GM10248 (cell line): ENCODE measurements at regions of chr2 and their contacts with region 1.

Region 1: GRCh38 chr2:45585267-45585861 is 25.7 kb downstream of the SRBD1 start:
- DNase-seq: peak; percentile 27
- CTCF ChIP-seq: peak; percentile 56

Region 2: DNA sequence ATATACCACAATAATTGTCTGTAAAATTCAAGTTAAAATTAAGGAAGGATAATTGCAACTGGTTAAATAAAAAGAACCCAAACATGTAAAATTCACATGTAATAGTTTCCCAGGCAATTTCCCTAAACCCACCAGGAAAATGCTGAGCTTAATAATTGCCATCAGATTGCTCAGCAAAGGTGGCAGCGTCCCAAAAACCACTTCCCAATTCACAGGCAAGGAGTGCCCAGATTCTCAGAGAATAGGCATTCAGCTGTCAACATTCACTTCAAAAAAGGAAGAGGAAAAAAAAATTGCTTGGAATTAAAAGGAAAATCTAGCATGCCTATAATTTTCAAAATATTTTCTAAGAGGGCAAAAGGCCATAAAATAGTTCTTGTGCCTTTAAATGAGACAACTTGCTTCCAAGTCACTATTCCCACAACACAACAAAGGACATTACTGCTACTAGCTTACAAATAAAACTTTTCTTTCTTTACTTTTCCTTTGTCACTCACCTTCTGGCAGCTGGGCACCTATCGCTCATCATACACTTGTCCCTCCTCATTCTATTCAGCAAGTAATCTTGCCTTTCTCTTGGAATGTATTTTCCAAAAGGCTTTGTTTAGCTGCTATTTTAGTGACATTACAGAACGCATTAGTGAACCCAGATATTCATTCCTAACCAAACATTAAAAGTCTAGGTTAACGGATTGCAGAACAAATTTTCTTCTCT is 10.5 kb after region 1 on chr2:
- CTCF ChIA-PET with region 1: interaction called, 12 read pairs
- POLR2A ChIA-PET with region 1: no interaction called
- DNase-seq: no peak
- CTCF ChIP-seq: no peak

Region 3: DNA sequence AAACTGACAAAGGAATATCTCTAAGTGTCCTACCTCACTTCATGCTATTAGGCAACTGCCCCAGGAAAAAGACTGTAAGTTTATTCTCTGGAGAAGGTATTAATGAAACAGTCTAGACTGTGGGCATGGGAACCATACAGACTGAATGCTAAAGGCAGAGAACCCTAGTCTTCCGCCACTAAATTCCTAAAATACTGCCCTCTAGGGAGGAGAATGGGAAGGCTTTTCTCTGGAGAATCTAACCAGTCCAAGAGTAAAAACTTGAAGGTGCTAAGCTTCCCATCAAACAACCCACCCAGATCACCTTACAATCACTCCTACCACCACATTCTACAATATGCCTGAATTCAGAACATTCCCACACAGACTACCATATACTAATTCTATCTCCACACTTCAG is 22.3 kb after region 1 on chr2:
- CTCF ChIA-PET with region 1: interaction called, 18 read pairs
- POLR2A ChIA-PET with region 1: no interaction called
- DNase-seq: no peak
- CTCF ChIP-seq: peak; percentile 29